ENCODE measurements at regions of chr9 and their contacts with region 1.

Region 1: DNA sequence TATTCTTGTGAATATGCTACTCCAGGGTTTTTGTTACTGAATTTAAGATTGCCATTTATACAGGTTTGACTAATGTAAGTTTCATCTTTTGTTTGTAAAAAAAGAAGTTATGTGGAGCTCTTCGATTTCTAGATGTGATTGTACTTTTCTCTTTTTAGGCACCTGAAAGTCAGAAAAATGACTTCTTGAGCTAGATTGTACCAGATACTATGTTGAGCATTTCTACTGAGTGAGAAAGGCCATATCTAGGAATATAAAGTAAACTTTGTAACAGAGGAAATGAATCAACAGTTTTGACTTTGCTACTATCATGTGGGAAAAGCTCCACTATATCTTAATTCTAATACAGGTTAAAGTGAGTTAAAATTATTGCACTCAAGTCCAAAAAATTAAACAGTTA is 25.1 kb downstream of the SMC5 start:
- H3K4me3 Mint-ChIP-seq: no peak overlapping the region
- H3K27ac Mint-ChIP-seq: no peak overlapping the region
- H3K4me1 Mint-ChIP-seq: peaks cover 4% of the 10 kb centered on the region
- H3K27me3 Mint-ChIP-seq: no peaks in the 10 kb centered on the region

Region 2: DNA sequence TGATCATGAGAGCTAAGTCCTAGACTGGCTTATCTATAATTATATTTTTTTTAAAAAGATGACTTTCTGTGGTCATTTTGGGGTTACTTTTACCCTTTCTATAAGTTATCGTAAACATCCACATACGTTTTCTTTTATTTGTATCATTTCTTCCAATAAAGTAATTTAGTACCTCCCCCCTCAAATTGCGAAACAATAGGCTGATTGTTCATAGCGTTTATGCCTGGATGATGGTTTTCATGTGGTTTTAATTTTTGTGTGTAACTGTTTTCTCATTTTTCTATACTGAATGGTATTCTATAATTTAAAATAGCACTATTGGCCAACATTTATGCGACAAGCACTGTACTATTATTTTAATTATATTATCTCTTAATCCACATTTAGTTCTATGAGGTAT is 19.4 kb after region 1 on chr9:
- intact Hi-C with region 1: loop called (anchors 2 kb)
- H3K4me3 Mint-ChIP-seq: no peak overlapping the region
- H3K27ac Mint-ChIP-seq: no peak overlapping the region
- H3K4me1 Mint-ChIP-seq: no peaks in the 10 kb centered on the region
- H3K27me3 Mint-ChIP-seq: no peaks in the 10 kb centered on the region

Measured in dendritic cell treated with granulocyte-macrophage colony-stimulating factor and Interleukin-4, amounts not matched to agents 40 ng/mL and 50 ng/mL, for 4 days (primary cell).